Common myeloid progenitor, CD34-positive (primary cell): ENCODE measurements at regions of chr5 and their contacts with region 1.

Region 1: DNA sequence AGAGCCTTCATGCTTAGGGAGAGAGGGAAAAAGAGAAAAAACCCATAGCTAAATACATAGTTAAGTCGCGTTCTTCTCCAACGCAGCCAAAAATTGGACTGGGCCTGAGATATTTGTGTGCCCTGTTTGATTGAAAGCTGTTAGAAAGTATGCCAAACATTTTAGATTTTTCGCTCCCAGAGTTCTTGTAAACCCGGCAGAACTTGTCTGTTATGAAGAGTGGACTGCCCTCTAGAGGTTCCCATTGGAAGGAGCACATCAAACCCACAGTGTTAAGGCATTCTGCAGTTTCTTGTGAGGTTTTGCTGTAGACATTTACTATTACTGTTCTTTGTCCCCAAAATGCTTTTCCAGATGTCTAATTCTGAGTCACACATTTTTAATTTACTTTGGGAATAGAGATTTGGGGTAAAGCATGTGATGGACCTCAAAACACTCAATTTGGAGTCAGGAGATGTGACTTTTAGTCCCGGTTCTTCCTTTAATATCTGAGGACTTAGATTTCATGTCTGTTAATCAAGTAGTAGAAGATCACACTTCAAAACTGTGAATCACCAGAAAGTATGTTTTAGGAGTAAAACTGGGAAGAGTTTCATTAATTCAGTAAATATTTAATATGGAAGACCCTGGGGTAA is 96.6 kb downstream of the PCSK1 start:
- DNase-seq: peak; percentile 83 to 92 (median 89)
- H3K4me3 ChIP-seq: peak overlapping the region in 1 of 7 experiments; percentile 31
- H3K27ac ChIP-seq: no peak overlapping the region
- H3K4me1 ChIP-seq: peaks cover 5 to 27% (median 13%) of the 10 kb centered on the region in 4 experiments
- H3K27me3 ChIP-seq: no peaks in the 10 kb centered on the region

Region 2: DNA sequence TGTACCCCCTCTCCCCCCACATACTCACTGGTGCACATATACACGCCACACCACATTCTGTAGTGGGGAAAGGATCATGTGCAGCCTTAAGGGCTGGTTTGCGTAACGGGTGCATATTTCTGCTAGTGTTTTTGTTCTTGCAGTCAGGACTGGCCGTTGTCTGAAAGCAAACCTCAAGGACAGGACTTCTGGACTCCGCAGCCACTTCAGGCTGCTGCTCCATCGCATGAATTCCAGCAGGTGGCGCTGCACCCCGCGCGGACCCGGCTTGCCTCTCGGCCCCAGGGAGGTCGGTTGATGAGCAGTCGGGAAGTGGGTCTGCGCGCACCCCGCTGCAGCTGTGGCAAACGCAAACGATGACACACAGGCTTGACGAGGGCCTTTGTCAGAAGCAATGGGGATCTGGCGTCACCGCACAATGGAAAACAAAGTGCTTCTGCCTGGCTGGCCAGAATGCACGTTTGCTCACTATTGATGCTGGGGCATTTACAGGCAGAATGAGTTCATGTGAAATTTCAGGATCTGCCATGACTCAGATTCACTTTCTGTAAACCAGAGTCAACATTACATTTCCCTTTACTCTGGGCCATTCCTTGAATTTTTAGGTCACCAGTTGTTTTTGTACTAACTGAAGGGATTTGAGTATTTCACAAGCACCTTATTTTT is 477.7 kb before region 1 on chr5:
- CTCF ChIA-PET with region 1: interaction called, 52 read pairs
- POLR2A ChIA-PET with region 1: no interaction called
- DNase-seq: peak; percentile 92 to 96 (median 96)
- H3K4me3 ChIP-seq: peak overlapping the region in 4 of 7 experiments; percentile 11 to 70 (median 35)
- H3K27ac ChIP-seq: no peak overlapping the region
- H3K4me1 ChIP-seq: peaks cover 6 to 28% (median 17%) of the 10 kb centered on the region in 4 experiments
- H3K27me3 ChIP-seq: no peaks in the 10 kb centered on the region

Region 3: DNA sequence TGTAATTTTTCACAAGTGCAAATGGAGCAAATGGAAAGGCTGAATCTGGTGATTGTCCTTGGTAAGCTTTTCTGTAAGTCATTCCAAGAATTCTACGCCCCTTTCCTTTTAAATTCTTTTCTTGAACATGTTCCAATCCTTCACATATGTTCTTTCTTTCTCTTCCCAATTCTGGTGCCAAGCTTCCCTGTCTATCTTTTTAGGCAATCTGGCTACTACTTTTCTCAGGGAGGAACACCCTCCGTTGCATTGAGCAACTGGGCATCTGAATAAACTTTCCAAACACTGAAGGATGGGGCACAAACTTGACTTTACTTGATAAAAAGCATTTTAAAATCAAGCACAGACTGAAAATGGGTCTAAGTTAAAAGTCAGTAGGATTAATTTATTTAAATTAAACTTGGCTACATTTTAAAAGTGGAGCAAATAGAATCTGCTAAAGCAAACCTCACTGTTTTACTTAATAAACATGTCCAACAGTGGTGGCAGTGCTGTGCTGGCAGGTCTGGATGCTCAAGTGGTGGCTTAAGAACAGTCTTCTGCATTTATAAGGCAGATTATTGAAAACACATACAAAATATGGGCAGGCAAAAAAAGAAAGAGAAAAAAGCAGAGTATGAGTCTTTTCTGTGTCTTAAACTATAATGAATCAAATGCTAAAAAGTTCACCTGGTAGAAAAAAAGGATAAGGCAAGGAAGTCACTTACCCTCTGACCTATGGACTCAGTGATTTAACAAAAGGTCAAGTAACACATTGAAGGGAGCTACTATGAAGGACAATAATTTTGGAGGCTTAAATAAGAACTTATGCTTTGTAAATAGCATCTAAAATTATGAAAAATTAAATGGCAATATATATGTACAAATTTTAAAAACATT is 380.2 kb before region 1 on chr5:
- CTCF ChIA-PET with region 1: interaction called, 13 read pairs
- POLR2A ChIA-PET with region 1: no interaction called
- DNase-seq: no peak
- H3K4me3 ChIP-seq: no peak overlapping the region
- H3K27ac ChIP-seq: no peak overlapping the region
- H3K4me1 ChIP-seq: peaks cover 4 to 16% (median 14%) of the 10 kb centered on the region in 4 experiments
- H3K27me3 ChIP-seq: peaks cover 0 to 13% (median 0%) of the 10 kb centered on the region in 5 experiments

Region 4: DNA sequence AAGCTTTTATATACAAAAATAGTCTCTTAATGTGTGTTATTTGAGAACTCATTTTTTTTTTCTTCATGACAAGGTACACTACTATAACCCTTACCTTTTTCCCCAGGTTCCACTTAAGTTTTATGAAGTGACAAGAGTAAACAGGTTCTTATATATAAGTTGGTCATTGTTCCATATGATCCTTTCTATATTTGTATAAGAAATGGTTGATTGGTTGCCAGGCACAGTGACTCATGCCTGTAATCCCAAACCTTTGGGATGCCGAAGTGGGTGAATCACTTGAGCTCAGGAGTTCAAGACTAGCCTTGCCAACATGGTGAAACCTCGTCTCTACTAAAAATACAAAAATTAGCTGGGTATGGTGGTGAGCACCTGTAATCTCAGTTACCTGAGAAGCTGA is 11.8 kb before region 1 on chr5:
- CTCF ChIA-PET with region 1: interaction called, 19 read pairs
- POLR2A ChIA-PET with region 1: no interaction called
- DNase-seq: no peak
- H3K4me3 ChIP-seq: no peak overlapping the region
- H3K27ac ChIP-seq: no peak overlapping the region
- H3K4me1 ChIP-seq: no peaks in the 10 kb centered on the region
- H3K27me3 ChIP-seq: no peaks in the 10 kb centered on the region

Region 5: GRCh38 chr5:96353220-96353619 is 16.8 kb after region 1 on chr5:
- CTCF ChIA-PET with region 1: no interaction called
- POLR2A ChIA-PET with region 1: no interaction called
- DNase-seq: no peak
- H3K4me3 ChIP-seq: no peak overlapping the region
- H3K27ac ChIP-seq: no peak overlapping the region
- H3K4me1 ChIP-seq: no peaks in the 10 kb centered on the region
- H3K27me3 ChIP-seq: no peaks in the 10 kb centered on the region